GM12878 (cell line): ENCODE measurements at regions of chr5 and their contacts with region 1.

Region 1: DNA sequence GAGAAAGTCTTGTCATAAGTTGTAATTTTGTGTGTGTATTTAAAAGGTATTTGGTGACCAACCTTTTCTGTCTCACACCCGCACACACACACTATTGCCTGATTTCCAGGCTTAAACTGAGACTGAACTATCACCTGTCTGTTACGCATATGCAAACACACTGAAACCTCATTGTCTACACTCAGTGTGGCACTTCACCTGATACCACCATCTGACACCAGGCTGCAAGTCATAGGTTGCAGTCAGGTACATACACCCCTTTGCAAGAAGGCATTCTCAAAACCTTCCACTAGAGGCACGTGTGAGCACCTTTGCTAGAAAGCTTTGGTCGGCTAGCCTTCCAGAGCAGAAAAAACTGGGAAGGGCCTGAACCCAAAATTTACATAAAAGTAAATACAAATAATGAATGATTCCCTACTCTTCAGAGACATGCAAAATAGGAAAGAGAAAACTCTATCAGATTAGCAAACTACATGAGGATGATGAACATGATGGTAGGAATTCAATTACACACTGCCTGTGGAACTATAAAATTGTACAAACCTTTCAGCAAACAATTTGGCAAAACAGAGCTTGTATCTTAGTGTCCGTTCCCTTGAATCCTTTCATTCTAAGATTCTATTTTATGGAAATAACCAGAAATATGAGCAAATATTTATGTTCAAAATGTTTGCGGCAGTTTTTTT is 5.9 kb upstream of the FOXD1 start:
- DNase-seq: no peak
- ATAC-seq: peak; percentile 90
- H3K4me3 ChIP-seq: no peak overlapping the region
- H3K27ac ChIP-seq: no peak overlapping the region
- H3K4me1 ChIP-seq: no peaks in the 10 kb centered on the region
- H3K27me3 ChIP-seq: peaks cover 6 to 20% of the 10 kb centered on the region in 2 experiments
- CTCF ChIP-seq: peak; percentile 69 to 94 (median 89)
- EP300 ChIP-seq: no peak
- POLR2A ChIP-seq: no peak
- RAD21 ChIP-seq: peak; percentile 24; the same call in 1 of the 2 replicates

Region 2: DNA sequence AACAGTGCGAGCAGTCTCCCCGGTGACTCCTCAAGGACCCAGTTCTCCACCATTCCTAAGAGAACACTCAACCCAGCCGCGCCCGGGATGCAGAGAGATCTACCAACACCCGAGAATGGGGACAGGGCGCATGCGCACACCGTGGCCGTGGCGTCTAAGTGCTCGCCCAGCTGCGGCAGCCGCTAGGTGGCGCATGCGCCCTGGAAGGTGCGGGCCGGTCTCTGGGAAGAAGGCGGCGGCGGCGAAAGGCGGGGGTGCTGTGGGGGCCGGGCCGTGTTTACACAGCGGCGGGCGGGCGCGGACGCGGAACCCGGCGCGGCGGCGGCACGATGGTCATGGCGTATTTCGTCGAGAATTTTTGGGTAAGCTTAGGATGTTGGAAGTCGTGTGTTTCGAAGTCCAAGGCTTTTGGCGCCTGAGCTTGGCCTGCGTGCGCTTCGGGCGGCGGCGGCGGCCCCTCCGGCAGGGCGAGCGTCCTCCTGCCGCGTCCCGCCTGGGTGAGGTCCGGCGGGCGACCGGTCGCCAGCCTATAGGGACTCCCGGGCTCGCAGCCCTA is 498.6 kb before region 1 on chr5 and contains the start of gene FCHO2:
- CTCF ChIA-PET with region 1: interaction called, 3 read pairs
- POLR2A ChIA-PET with region 1: no interaction called
- RAD21 ChIA-PET with region 1: no interaction called
- SMC1A ChIA-PET with region 1: no interaction called
- in situ Hi-C with region 1: no loop called
- intact Hi-C with region 1: loop called (anchors 5 kb)
- DNase-seq: peak; percentile 57
- ATAC-seq: peak; percentile 97
- H3K4me3 ChIP-seq: peak within 1 kb of the TSS; percentile 73
- H3K27ac ChIP-seq: no peak within 1 kb of the TSS
- H3K4me1 ChIP-seq: no peaks in the 10 kb centered on the region; the same call in 1 of the 2 replicates
- H3K27me3 ChIP-seq: peaks cover 0 to 2% of the 10 kb centered on the region in 2 experiments; a peak in 2 of 4 replicates
- CTCF ChIP-seq: peak; percentile 73 to 90 (median 83)
- EP300 ChIP-seq: no peak
- POLR2A ChIP-seq: peak; percentile 43; the same call in 1 of the 2 replicates
- RAD21 ChIP-seq: peak; percentile 57
- polyA plus RNA-seq, gene FCHO2: 0.05 to 0.19 TPM

Region 3: DNA sequence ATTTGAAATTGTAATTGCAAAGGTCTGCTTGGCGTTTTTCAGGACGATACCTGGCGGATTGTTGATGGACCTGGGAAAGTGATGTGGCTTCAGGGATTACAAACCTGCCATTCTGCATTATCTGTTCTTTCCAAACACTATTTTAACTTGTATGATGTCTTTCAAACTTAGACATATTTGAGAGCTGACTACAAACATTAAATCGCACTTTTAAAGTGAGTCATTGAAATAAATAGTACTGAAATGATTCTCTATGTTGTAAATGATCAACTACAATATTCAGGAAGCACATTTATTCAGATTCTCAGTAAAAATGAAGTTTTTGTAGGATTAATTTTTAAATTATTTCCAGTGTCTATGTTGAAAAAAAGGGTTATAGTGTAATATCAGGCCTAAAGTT is 366.5 kb before region 1 on chr5:
- CTCF ChIA-PET with region 1: interaction called, 5 read pairs
- POLR2A ChIA-PET with region 1: no interaction called
- RAD21 ChIA-PET with region 1: interaction called, 3 read pairs
- SMC1A ChIA-PET with region 1: no interaction called
- in situ Hi-C with region 1: loop called (anchors 10 kb)
- intact Hi-C with region 1: loop called (anchors 1 kb)
- DNase-seq: no peak
- ATAC-seq: no peak
- H3K4me3 ChIP-seq: no peak overlapping the region
- H3K27ac ChIP-seq: no peak overlapping the region
- H3K4me1 ChIP-seq: no peaks in the 10 kb centered on the region
- H3K27me3 ChIP-seq: no peaks in the 10 kb centered on the region
- CTCF ChIP-seq: no peak
- EP300 ChIP-seq: no peak
- POLR2A ChIP-seq: no peak
- RAD21 ChIP-seq: no peak

Region 4: DNA sequence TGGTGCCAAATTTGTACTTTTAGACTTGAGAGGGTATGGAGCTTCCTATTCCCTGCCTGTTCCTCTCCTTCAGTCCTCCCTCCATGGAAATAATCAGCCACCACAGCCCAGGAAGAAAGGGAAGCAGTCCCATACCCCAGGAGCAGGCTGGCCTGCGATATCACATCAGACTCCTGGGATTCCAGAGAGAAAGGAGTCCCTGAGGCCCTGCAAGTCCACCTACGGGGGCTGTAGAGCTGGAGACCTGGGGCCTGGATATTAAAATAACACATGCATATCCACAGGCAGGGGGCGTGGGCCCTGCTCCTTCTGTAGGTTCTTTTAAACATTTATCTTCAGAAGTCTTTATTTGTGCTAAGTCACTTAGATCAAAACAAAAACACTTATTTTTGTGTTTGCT is 164.3 kb before region 1 on chr5:
- CTCF ChIA-PET with region 1: no interaction called
- POLR2A ChIA-PET with region 1: no interaction called
- RAD21 ChIA-PET with region 1: no interaction called
- SMC1A ChIA-PET with region 1: no interaction called
- in situ Hi-C with region 1: no loop called
- intact Hi-C with region 1: loop called (anchors 5 kb)
- DNase-seq: no peak
- ATAC-seq: no peak
- H3K4me3 ChIP-seq: no peak overlapping the region
- H3K27ac ChIP-seq: no peak overlapping the region
- H3K4me1 ChIP-seq: no peaks in the 10 kb centered on the region
- H3K27me3 ChIP-seq: peaks cover 2 to 3% of the 10 kb centered on the region in 2 experiments; a peak in 2 of 4 replicates
- CTCF ChIP-seq: no peak
- EP300 ChIP-seq: no peak
- POLR2A ChIP-seq: no peak
- RAD21 ChIP-seq: no peak

Region 5: GRCh38 chr5:73370640-73371583 is 83.6 kb before region 1 on chr5:
- CTCF ChIA-PET with region 1: no interaction called
- POLR2A ChIA-PET with region 1: no interaction called
- RAD21 ChIA-PET with region 1: no interaction called
- SMC1A ChIA-PET with region 1: no interaction called
- in situ Hi-C with region 1: no loop called
- intact Hi-C with region 1: no loop called
- DNase-seq: no peak
- ATAC-seq: no peak
- H3K4me3 ChIP-seq: no peak overlapping the region
- H3K27ac ChIP-seq: no peak overlapping the region
- H3K4me1 ChIP-seq: no peaks in the 10 kb centered on the region
- H3K27me3 ChIP-seq: peaks cover 3 to 4% of the 10 kb centered on the region in 2 experiments; a peak in 2 of 4 replicates
- CTCF ChIP-seq: no peak
- EP300 ChIP-seq: no peak
- POLR2A ChIP-seq: no peak
- RAD21 ChIP-seq: no peak

Region 6: GRCh38 chr5:73395256-73395655 is 59.2 kb before region 1 on chr5:
- CTCF ChIA-PET with region 1: no interaction called
- POLR2A ChIA-PET with region 1: no interaction called
- RAD21 ChIA-PET with region 1: no interaction called
- SMC1A ChIA-PET with region 1: no interaction called
- in situ Hi-C with region 1: no loop called
- intact Hi-C with region 1: no loop called
- DNase-seq: no peak
- ATAC-seq: no peak
- H3K4me3 ChIP-seq: no peak overlapping the region
- H3K27ac ChIP-seq: no peak overlapping the region
- H3K4me1 ChIP-seq: no peaks in the 10 kb centered on the region
- H3K27me3 ChIP-seq: no peaks in the 10 kb centered on the region; a peak in 1 of 4 replicates
- CTCF ChIP-seq: no peak
- EP300 ChIP-seq: no peak
- POLR2A ChIP-seq: no peak
- RAD21 ChIP-seq: no peak

Region 7: DNA sequence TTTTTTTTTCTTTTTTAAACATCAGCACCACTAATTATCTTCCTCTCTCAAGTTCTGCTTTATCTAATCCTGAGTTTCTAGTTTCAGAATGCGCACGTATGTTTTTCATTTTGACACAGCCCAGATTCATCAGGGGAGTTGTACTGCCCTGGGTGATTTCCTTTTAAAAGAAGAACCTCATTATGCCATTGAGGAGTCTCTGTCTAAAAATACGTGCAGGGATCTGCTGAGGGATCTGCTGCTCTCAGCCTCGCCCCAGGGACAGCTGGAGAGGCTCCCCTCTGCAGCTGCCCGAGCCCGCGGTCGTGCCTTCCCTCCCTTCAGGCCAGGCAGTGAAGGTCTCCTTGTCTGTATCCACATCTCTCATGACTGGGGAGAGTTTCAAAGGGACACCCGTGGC is 444.6 kb after region 1 on chr5:
- CTCF ChIA-PET with region 1: no interaction called
- POLR2A ChIA-PET with region 1: no interaction called
- RAD21 ChIA-PET with region 1: no interaction called
- SMC1A ChIA-PET with region 1: no interaction called
- in situ Hi-C with region 1: no loop called
- intact Hi-C with region 1: no loop called
- DNase-seq: peak; percentile 75
- ATAC-seq: peak; percentile 92
- H3K4me3 ChIP-seq: peak overlapping the region; percentile 4; the same call in 1 of the 2 replicates
- H3K27ac ChIP-seq: no peak overlapping the region
- H3K4me1 ChIP-seq: peaks cover 12% of the 10 kb centered on the region
- H3K27me3 ChIP-seq: no peaks in the 10 kb centered on the region; a peak in 1 of 4 replicates
- CTCF ChIP-seq: no peak
- EP300 ChIP-seq: peak; percentile 97 to 98
- POLR2A ChIP-seq: no peak
- RAD21 ChIP-seq: no peak